ENCODE measurements at regions of chr1 and their contacts with region 1.

Region 1: DNA sequence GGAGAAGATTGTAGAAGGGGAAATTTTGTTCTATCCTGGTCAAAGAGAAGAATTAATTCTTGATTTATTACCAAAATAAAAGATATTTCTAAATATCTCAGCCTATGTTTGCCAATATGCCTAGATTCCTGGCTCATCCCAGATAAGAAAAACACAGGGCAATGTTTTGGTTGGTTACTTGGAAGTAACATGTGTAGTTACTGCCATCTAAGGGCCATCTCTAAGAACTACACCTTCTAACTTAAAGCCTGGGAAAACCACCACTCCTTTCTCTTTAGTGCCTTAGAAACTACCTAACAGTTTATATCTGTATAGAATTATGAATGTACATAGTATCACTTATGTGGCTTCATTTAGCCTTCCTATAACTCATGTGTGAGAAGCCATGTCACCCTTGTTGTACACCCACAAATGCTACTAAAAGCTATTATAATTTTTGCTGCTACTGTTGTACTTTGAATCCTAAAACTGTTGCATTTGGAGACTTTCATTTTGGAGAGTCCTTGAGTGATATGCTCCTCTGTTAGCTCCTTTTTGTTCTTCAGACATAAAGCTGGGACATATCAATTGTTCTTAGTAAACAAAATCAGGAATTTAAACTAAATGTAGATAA is 4.5 kb downstream of the AIM2 start:
- DNase-seq: peak in 2 of 9 experiments; percentile 63 to 73
- ATAC-seq: no peak
- H3K4me3 ChIP-seq: no peak overlapping the region
- H3K4me3 Mint-ChIP-seq: no peak overlapping the region
- H3K27ac ChIP-seq: no peak overlapping the region
- H3K27ac Mint-ChIP-seq: no peak overlapping the region
- H3K4me1 ChIP-seq: peaks cover 14% of the 10 kb centered on the region
- H3K4me1 Mint-ChIP-seq: peaks cover 24% of the 10 kb centered on the region
- H3K27me3 ChIP-seq: no peaks in the 10 kb centered on the region
- H3K27me3 Mint-ChIP-seq: no peaks in the 10 kb centered on the region
- CTCF ChIP-seq: peak; percentile 97

Region 2: DNA sequence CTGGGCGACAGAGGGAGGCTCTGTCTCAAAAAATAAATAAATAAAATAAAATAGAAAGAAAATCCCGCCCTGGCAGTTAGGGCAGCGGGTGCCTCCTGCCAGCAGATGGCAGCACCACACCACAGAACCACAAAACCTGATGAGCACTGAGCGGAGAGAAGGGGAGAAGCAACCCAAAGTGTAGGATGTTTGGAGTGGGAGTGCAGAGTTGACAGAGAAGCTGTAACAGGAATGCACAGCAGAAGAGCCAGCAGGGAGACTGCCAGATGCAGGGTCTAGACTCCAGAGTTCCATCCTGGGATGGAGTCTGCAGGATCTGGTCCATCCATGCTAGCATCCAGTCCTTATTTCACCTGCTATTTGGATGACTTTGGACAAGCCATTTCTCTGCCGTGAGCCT is 1108.4 kb before region 1 on chr1:
- CTCF ChIA-PET with region 1: no interaction called
- POLR2A ChIA-PET with region 1: no interaction called
- intact Hi-C with region 1: loop called in 1 of 2 experiments (anchors 5 kb)
- DNase-seq: peak; percentile 2 to 69 (median 44)
- ATAC-seq: peak; percentile 40
- H3K4me3 ChIP-seq: no peak overlapping the region
- H3K4me3 Mint-ChIP-seq: no peak overlapping the region
- H3K27ac ChIP-seq: no peak overlapping the region
- H3K27ac Mint-ChIP-seq: no peak overlapping the region
- H3K4me1 ChIP-seq: no peaks in the 10 kb centered on the region
- H3K4me1 Mint-ChIP-seq: no peaks in the 10 kb centered on the region
- H3K27me3 ChIP-seq: peaks cover 2% of the 10 kb centered on the region in 2 experiments
- H3K27me3 Mint-ChIP-seq: peaks cover 27% of the 10 kb centered on the region
- CTCF ChIP-seq: peak; percentile 68

Region 3: DNA sequence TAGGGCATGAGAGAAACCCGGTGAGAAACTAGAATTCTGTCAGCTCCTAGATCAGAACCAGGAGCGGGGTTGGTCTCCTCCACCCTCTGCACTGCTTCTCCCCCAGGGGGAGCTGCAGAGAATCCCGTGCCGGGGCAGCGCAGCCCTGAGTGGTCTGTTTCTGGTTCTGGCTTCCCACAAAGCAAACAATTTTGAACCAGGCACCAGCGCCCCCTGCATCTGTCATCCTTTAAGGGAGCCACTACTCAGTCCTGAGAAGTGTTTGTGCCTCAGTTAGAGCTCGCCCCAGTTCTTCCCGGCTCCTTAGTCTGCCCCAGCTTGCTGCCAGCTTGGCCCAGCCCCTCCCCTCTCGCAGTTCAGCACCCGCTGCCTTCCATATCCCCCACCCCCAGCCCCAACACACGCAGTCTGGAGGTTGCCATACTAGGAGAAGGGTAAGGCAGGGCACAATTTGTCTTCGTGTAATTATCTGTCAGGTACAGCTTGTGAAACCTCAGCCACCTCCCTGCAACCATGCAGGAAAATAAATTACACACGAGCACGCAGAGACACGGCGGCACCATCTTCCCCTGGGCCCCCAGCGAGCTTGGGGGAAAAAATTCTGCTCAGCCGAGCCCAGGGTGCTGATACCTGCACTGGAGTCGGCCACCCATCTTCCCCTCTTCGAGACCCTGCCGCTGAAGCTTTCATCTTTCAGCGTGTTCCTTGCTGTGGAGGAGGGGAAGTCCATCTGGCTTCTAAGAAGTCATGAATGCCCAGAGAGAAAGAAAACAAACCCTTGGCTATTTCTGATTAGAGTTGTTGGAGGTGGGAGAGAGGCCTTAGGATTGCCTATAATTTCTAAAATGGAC is 954.0 kb before region 1 on chr1:
- CTCF ChIA-PET with region 1: interaction called, 3 read pairs
- POLR2A ChIA-PET with region 1: no interaction called
- intact Hi-C with region 1: loop called in 1 of 2 experiments (anchors 5 kb)
- DNase-seq: peak in 8 of 9 experiments; percentile 19 to 66 (median 56)
- ATAC-seq: peak; percentile 77
- H3K4me3 ChIP-seq: peak overlapping the region in 1 of 2 experiments; percentile 22
- H3K4me3 Mint-ChIP-seq: peak overlapping the region; percentile 54
- H3K27ac ChIP-seq: no peak overlapping the region
- H3K27ac Mint-ChIP-seq: no peak overlapping the region
- H3K4me1 ChIP-seq: peaks cover 5% of the 10 kb centered on the region
- H3K4me1 Mint-ChIP-seq: peaks cover 19% of the 10 kb centered on the region
- H3K27me3 ChIP-seq: peaks cover 12% of the 10 kb centered on the region in 2 experiments
- H3K27me3 Mint-ChIP-seq: peaks cover 60% of the 10 kb centered on the region
- CTCF ChIP-seq: peak; percentile 53

Region 4: GRCh38 chr1:158203693-158204457 is 868.2 kb before region 1 on chr1:
- CTCF ChIA-PET with region 1: interaction called, 76 read pairs
- POLR2A ChIA-PET with region 1: no interaction called
- intact Hi-C with region 1: loop called (anchors 1 kb)
- DNase-seq: peak in 2 of 9 experiments; percentile 57 to 71
- ATAC-seq: peak; percentile 64
- H3K4me3 ChIP-seq: no peak overlapping the region
- H3K4me3 Mint-ChIP-seq: no peak overlapping the region
- H3K27ac ChIP-seq: no peak overlapping the region
- H3K27ac Mint-ChIP-seq: no peak overlapping the region
- H3K4me1 ChIP-seq: peaks cover 4% of the 10 kb centered on the region
- H3K4me1 Mint-ChIP-seq: peaks cover 12% of the 10 kb centered on the region
- H3K27me3 ChIP-seq: no peaks in the 10 kb centered on the region
- H3K27me3 Mint-ChIP-seq: peaks cover 8% of the 10 kb centered on the region
- CTCF ChIP-seq: peak; percentile 97

Region 5: GRCh38 chr1:158793604-158794003 is 278.5 kb before region 1 on chr1:
- CTCF ChIA-PET with region 1: interaction called, 3 read pairs
- POLR2A ChIA-PET with region 1: no interaction called
- intact Hi-C with region 1: loop called (anchors 2 to 5 kb)
- DNase-seq: peak in 5 of 9 experiments; percentile 7 to 61 (median 39)
- ATAC-seq: peak; percentile 38
- H3K4me3 ChIP-seq: no peak overlapping the region
- H3K4me3 Mint-ChIP-seq: no peak overlapping the region
- H3K27ac ChIP-seq: no peak overlapping the region
- H3K27ac Mint-ChIP-seq: no peak overlapping the region
- H3K4me1 ChIP-seq: no peaks in the 10 kb centered on the region
- H3K4me1 Mint-ChIP-seq: no peaks in the 10 kb centered on the region
- H3K27me3 ChIP-seq: no peaks in the 10 kb centered on the region
- H3K27me3 Mint-ChIP-seq: peaks cover 8% of the 10 kb centered on the region
- CTCF ChIP-seq: no peak

Region 6: DNA sequence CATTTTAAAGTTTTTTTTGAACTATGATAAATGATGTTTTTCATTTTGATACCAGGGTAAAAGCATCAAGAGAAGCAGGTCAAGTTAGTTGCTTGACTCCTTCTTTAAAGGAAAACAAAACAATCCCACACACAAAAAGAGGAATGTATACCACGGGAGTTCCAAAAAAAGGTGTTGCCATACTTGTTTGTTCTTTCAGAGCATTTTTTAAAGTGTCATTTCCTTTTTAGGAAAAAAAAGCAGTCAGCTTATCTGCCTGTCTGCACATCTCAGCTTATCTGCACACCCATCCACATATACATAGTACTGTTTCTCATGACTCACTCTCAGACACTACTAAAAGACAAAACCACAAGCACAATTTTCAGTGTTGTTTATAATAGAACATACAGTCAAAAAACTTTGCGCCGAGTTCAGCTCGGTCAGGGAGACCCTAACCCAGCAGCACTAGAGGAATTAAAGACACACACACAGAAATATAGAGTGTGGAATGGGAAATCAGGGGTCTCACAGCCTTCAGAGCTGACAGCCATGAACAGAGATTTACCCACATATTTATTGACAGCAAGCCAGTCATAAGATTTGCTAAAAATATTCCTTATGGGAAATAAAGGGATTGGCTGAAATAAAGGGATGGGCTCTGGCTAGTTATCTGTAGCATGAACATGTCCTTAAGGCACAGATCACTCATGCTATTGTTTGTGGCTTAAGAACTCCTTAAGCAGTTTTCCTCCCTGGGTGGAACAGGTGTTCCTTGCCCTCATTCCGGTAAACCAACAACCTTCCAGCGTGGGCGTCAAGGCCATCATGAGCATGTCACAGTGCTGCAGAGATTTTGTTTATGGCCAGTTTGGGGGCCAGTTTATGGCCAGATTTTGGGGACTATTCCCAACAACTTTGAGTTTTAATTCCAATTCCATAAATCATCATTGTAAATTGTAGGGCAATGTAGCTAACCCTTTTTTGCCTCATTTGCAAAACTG is 252.3 kb before region 1 on chr1:
- CTCF ChIA-PET with region 1: no interaction called
- POLR2A ChIA-PET with region 1: no interaction called
- intact Hi-C with region 1: no loop called
- DNase-seq: peak in 4 of 9 experiments; percentile 17 to 60 (median 38)
- ATAC-seq: peak; percentile 71
- H3K4me3 ChIP-seq: no peak overlapping the region
- H3K4me3 Mint-ChIP-seq: peak overlapping the region; percentile 12
- H3K27ac ChIP-seq: peak overlapping the region in 1 of 2 experiments; percentile 61
- H3K27ac Mint-ChIP-seq: peak overlapping the region; percentile 69
- H3K4me1 ChIP-seq: no peaks in the 10 kb centered on the region
- H3K4me1 Mint-ChIP-seq: peaks cover 16% of the 10 kb centered on the region
- H3K27me3 ChIP-seq: no peaks in the 10 kb centered on the region
- H3K27me3 Mint-ChIP-seq: peaks cover 2% of the 10 kb centered on the region
- CTCF ChIP-seq: no peak

Region 7: GRCh38 chr1:159030877-159031447 is 41.1 kb before region 1 on chr1:
- CTCF ChIA-PET with region 1: interaction called, 12 read pairs
- POLR2A ChIA-PET with region 1: no interaction called
- intact Hi-C with region 1: no loop called
- DNase-seq: no peak
- ATAC-seq: no peak
- H3K4me3 ChIP-seq: no peak overlapping the region
- H3K4me3 Mint-ChIP-seq: no peak overlapping the region
- H3K27ac ChIP-seq: no peak overlapping the region
- H3K27ac Mint-ChIP-seq: peak overlapping the region; percentile 77
- H3K4me1 ChIP-seq: peaks cover 15% of the 10 kb centered on the region
- H3K4me1 Mint-ChIP-seq: peaks cover 61% of the 10 kb centered on the region
- H3K27me3 ChIP-seq: no peaks in the 10 kb centered on the region
- H3K27me3 Mint-ChIP-seq: no peaks in the 10 kb centered on the region
- CTCF ChIP-seq: no peak

Region 8: DNA sequence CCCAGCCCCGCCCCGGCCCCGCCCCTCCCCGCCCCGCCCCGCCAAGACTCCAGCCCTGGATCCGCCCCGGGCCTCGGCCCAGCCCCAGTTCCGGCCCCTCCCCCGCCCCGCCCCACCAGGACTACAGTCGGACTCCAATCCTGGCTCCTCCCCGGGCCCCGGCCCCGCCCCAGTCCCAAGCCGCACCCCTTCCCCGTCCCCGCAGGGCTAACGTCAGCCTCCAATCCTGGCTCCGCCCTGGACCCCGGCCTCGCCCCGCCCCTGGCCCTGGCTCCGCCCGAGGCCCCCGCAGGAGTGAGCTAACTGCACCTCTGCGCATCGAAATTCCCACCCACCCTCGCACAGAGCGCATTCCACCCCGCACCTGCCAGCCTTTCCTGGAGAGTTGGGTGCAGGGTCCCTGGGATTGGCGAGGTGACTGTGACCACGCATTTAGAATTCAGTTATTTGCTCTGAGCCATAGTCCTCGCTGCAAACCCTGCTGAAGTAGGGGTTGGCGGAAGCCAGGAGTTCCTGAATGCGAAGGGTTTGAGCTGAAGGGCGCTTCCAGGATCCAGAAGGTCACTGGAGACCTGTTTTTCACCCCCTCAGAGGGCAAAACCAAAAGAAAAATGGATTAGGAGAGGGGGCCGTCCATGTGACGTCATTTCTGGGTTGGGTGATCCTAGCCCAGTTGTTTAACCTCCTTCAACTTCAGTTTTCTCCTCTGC is 1026.9 kb after region 1 on chr1:
- CTCF ChIA-PET with region 1: no interaction called
- POLR2A ChIA-PET with region 1: no interaction called
- intact Hi-C with region 1: no loop called
- DNase-seq: peak; percentile 96 to 99 (median 98)
- ATAC-seq: peak; percentile 86
- H3K4me3 ChIP-seq: peak overlapping the region; percentile 61 to 82
- H3K4me3 Mint-ChIP-seq: peak overlapping the region; percentile 80
- H3K27ac ChIP-seq: peak overlapping the region; percentile 93 to 99
- H3K27ac Mint-ChIP-seq: peak overlapping the region; percentile 94
- H3K4me1 ChIP-seq: peaks cover 77% of the 10 kb centered on the region
- H3K4me1 Mint-ChIP-seq: peaks cover 77% of the 10 kb centered on the region
- H3K27me3 ChIP-seq: no peaks in the 10 kb centered on the region
- H3K27me3 Mint-ChIP-seq: no peaks in the 10 kb centered on the region
- CTCF ChIP-seq: no peak

Measured in CD8-positive, alpha-beta T cell (primary cell).